ENCODE measurements at regions of chr2 and their contacts with region 1.

Region 1: GRCh38 chr2:216090369-216090786 is 8.7 kb downstream of the TMEM169 start:
- DNase-seq: no peak
- H3K4me3 Mint-ChIP-seq: no peak overlapping the region
- H3K27ac Mint-ChIP-seq: no peak overlapping the region
- H3K4me1 Mint-ChIP-seq: peaks cover 29% of the 10 kb centered on the region
- H3K27me3 Mint-ChIP-seq: no peaks in the 10 kb centered on the region
- CTCF ChIP-seq: no peak

Region 2: GRCh38 chr2:215904101-215904500 is 186.3 kb before region 1 on chr2:
- CTCF ChIA-PET with region 1: no interaction called
- intact Hi-C with region 1: no loop called
- DNase-seq: no peak
- H3K4me3 Mint-ChIP-seq: no peak overlapping the region
- H3K27ac Mint-ChIP-seq: no peak overlapping the region
- H3K4me1 Mint-ChIP-seq: no peaks in the 10 kb centered on the region
- H3K27me3 Mint-ChIP-seq: no peaks in the 10 kb centered on the region
- CTCF ChIP-seq: no peak

Region 3: GRCh38 chr2:215920244-215921100 is 169.9 kb before region 1 on chr2:
- CTCF ChIA-PET with region 1: no interaction called
- intact Hi-C with region 1: no loop called
- DNase-seq: peak; percentile 76
- H3K4me3 Mint-ChIP-seq: no peak overlapping the region
- H3K27ac Mint-ChIP-seq: no peak overlapping the region
- H3K4me1 Mint-ChIP-seq: peaks cover 28% of the 10 kb centered on the region
- H3K27me3 Mint-ChIP-seq: no peaks in the 10 kb centered on the region
- CTCF ChIP-seq: peak; percentile 92

Region 4: GRCh38 chr2:216298723-216299495 is 208.5 kb after region 1 on chr2:
- CTCF ChIA-PET with region 1: interaction called, 11 read pairs
- intact Hi-C with region 1: no loop called
- DNase-seq: no peak
- H3K4me3 Mint-ChIP-seq: no peak overlapping the region
- H3K27ac Mint-ChIP-seq: no peak overlapping the region
- H3K4me1 Mint-ChIP-seq: no peaks in the 10 kb centered on the region
- H3K27me3 Mint-ChIP-seq: peaks cover 57% of the 10 kb centered on the region
- CTCF ChIP-seq: no peak

Measured in Calu3 (cell line).